Activated T-helper 2 cell treated with anti-CD3 and anti-CD28 coated beads, Interferon-gamma antibody, Interleukin-2, Interleukin-4, amounts not matched to agents 10 μg/mL and 5 μg/mL and 100 μg/mL, durations not matched to agents 14 hours and 24 hours and 36 hours (primary cell): ENCODE measurements at regions of chr11 and their contacts with region 1.

Region 1: GRCh38 chr11:33722579-33723225 is 13.5 kb downstream of the CD59 start:
- DNase-seq: peak; percentile 38
- H3K4me3 Mint-ChIP-seq: peak overlapping the region; percentile 48
- H3K27ac Mint-ChIP-seq: peak overlapping the region; percentile 94
- H3K4me1 Mint-ChIP-seq: peaks cover 69% of the 10 kb centered on the region
- H3K27me3 Mint-ChIP-seq: peaks cover 6% of the 10 kb centered on the region

Region 2: GRCh38 chr11:33039274-33040032 is 683.2 kb before region 1 on chr11 and contains the start of gene TCP11L1:
- intact Hi-C with region 1: loop called (anchors 10 kb)
- DNase-seq: peak; percentile 74
- H3K4me3 Mint-ChIP-seq: peak within 1 kb of the TSS; percentile 91
- H3K27ac Mint-ChIP-seq: peak within 1 kb of the TSS; percentile 93
- H3K4me1 Mint-ChIP-seq: peaks cover 36% of the 10 kb centered on the region
- H3K27me3 Mint-ChIP-seq: peaks cover 18% of the 10 kb centered on the region
- total RNA-seq, gene TCP11L1: 12.4 and 13.8 TPM in 2 replicates

Region 3: DNA sequence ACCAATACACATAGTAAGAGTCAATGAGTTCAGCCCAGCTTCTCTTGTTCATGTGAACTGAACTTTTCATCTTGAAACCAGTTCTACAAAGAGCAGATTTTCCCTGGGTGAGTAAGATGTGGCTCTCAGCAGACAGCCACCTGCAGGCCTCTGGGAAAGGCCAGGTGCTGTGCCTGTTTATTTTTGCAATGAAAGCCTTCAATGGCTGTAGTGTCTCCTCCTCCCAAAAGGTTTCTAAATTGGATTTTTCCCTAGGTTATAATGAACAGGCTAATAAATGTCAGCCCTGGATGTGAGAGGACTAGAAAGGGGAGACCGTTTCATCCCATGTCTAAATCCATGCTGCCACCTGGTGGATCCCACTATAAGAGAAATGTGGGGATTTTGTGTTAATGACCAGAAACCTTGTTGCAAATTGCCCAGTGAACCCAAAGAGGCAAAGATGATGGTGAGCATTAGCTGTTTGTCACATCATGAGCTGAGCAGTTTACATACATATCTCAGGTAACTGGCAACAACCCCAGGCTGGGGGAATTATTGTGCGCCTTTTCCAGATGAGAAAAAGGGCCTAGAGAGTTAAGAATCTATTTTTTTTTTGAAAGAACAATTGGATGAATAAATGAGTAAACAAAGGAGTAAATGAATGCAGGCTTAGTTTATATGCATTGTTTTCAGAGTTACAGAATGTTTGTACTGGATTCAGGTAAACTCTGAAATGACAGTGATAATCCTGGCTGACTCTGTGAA is 34.8 kb before region 1 on chr11:
- intact Hi-C with region 1: loop called (anchors 1 kb)
- DNase-seq: no peak
- H3K4me3 Mint-ChIP-seq: no peak overlapping the region
- H3K27ac Mint-ChIP-seq: no peak overlapping the region
- H3K4me1 Mint-ChIP-seq: peaks cover 10% of the 10 kb centered on the region
- H3K27me3 Mint-ChIP-seq: peaks cover 8% of the 10 kb centered on the region

Region 4: DNA sequence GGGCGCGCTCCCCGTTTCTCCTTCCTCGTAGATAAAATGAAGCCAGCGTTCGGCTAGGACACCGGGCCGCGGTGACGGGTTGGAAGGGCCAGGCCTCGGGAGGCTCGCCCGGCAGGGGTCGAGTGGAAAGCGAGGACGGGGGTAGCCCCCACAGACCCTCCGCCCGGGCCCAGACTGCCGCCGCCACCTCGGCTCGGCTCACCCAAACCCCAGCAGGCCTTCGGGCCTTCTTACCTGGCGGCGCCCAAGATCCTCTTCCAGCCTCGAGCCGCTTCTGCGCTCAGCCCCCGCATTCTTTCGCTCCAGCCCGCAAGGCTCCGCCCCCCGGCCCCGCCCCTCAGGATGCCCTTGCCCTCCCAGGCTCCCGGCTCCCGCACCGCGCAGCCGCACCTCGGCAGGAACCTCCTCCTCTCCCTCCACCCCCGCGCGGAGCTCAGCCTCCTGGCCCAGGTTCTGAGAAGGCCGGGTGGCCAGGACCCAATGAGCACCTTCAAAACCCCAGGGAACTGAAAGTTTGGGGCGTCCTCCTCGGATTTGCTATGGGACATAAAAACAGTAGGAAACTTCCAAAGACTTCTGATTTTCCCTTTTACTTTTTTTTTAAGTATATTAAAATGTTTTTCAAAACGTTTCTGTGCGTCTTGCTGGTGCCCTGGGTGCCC is 13.6 kb after region 1 on chr11 and contains the start of gene CD59:
- intact Hi-C with region 1: loop called (anchors 1 kb)
- DNase-seq: peak; percentile 79
- H3K4me3 Mint-ChIP-seq: peak within 1 kb of the TSS; percentile 87
- H3K27ac Mint-ChIP-seq: peak within 1 kb of the TSS; percentile 86
- H3K4me1 Mint-ChIP-seq: peaks cover 35% of the 10 kb centered on the region
- H3K27me3 Mint-ChIP-seq: peaks cover 12% of the 10 kb centered on the region
- total RNA-seq, gene CD59: 165 and 173 TPM in 2 replicates

Region 5: DNA sequence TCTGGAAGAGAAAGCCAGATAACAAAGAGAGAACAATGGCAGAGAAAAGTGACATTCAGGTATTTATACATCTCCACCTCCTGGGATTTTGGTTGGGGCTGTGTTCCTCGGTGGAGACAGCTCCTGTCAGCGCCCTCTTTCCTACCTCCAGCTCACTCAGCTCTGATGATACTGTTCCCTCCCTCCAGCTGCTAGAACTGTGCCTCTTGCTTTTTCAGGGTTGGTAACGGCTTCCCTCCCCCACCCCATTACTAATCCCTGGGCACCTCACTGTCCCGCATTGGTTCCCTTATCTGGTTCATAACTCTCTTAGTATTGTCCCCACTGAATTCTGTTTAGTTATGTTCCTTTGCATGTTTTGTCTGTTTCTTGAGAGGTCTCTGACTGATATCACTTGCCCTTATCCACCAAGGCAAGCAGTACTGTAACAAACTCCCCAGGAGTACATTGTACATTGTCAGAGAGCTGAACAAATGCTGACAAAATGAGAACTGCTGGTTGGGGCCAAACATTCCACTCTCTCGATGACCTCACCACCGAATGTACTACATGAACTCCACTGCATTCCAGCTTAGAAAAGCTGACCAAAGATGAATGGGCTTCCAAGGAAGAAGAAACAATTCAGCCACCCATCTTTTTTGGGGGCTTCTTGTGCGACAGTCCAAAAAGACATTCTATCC is 57.3 kb after region 1 on chr11:
- intact Hi-C with region 1: no loop called
- DNase-seq: no peak
- H3K4me3 Mint-ChIP-seq: no peak overlapping the region
- H3K27ac Mint-ChIP-seq: no peak overlapping the region
- H3K4me1 Mint-ChIP-seq: peaks cover 8% of the 10 kb centered on the region
- H3K27me3 Mint-ChIP-seq: peaks cover 55% of the 10 kb centered on the region

Region 6: GRCh38 chr11:33829433-33830141 is 106.9 kb after region 1 on chr11:
- intact Hi-C with region 1: loop called (anchors 5 kb)
- DNase-seq: no peak
- H3K4me3 Mint-ChIP-seq: peak overlapping the region; percentile 71
- H3K27ac Mint-ChIP-seq: no peak overlapping the region
- H3K4me1 Mint-ChIP-seq: peaks cover 3% of the 10 kb centered on the region
- H3K27me3 Mint-ChIP-seq: peaks cover 53% of the 10 kb centered on the region

Region 7: GRCh38 chr11:34234086-34234740 is 511.5 kb after region 1 on chr11:
- intact Hi-C with region 1: loop called (anchors 5 kb)
- DNase-seq: peak; percentile 77
- H3K4me3 Mint-ChIP-seq: peak overlapping the region; percentile 20
- H3K27ac Mint-ChIP-seq: peak overlapping the region; percentile 88
- H3K4me1 Mint-ChIP-seq: peaks cover 75% of the 10 kb centered on the region
- H3K27me3 Mint-ChIP-seq: no peaks in the 10 kb centered on the region